MCF 10A (cell line): ENCODE measurements at regions of chrX and their contacts with region 1.

Region 1: DNA sequence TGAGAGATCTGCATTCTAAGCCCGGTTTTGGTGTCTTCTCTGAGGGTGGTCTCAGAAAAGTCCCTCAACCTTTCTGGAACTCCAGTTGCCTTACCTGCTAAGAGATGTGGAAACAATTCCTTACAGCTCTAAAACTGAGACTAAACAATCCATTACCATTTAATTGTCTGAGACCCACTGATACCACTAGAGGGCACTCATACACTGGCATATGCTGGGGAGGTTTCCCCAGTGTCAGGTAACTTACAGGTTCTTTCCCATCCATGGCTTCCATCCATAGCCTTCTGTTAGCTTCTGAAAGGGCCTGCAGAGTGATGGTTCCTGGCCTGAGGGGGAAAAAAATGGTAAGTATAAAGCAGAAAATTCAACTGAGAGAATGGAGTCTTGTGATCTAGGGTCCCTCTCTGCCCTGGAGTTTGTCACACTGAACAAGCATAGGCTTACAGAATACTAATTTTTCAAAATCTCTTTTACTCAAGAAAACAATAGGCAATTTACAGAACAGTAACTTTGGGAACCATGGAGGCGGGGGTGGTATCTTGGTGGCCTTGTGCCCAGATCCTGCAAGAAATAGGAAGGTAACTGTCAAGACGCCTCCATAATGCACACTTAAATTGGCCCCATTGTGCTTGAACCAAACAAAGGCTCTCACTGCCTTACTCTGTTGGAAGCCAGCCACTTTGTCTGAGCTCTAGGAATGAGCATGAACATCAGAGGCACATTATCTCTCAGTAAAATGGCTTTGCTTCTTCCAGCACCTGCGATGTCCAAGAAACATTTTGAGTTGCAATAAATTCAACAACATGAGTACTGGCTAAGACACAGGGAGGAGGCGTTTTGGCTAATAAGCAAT is 236.1 kb downstream of the OPHN1 start:
- DNase-seq: peak; percentile 73
- H3K4me3 Mint-ChIP-seq: no peak overlapping the region
- H3K27ac Mint-ChIP-seq: no peak overlapping the region
- H3K4me1 Mint-ChIP-seq: no peaks in the 10 kb centered on the region
- H3K27me3 Mint-ChIP-seq: peaks cover 22% of the 10 kb centered on the region
- CTCF ChIP-seq: peak; percentile 69

Region 2: DNA sequence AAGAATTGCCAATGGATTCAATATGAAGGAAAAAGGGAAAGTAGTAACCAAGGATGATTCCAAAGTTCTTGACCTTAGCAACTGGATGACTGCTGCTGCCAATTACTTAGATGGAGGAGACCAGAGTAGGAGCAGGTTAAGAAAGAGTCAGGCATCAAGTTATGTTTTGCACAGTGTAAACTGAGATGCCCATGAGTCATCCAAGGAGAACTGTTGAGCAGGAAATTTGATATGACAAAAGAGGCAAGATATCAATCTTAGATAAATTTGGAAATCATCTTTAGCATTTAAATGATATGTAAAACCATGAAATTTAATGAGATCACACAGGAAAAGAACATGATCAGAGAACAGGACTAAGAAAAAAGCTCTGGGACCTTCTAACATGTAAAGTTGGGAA is 125.1 kb before region 1 on chrX:
- CTCF ChIA-PET with region 1: no interaction called
- POLR2A ChIA-PET with region 1: no interaction called
- intact Hi-C with region 1: no loop called
- DNase-seq: peak; percentile 37
- H3K4me3 Mint-ChIP-seq: no peak overlapping the region
- H3K27ac Mint-ChIP-seq: no peak overlapping the region
- H3K4me1 Mint-ChIP-seq: peaks cover 6% of the 10 kb centered on the region
- H3K27me3 Mint-ChIP-seq: no peaks in the 10 kb centered on the region
- CTCF ChIP-seq: no peak

Region 3: DNA sequence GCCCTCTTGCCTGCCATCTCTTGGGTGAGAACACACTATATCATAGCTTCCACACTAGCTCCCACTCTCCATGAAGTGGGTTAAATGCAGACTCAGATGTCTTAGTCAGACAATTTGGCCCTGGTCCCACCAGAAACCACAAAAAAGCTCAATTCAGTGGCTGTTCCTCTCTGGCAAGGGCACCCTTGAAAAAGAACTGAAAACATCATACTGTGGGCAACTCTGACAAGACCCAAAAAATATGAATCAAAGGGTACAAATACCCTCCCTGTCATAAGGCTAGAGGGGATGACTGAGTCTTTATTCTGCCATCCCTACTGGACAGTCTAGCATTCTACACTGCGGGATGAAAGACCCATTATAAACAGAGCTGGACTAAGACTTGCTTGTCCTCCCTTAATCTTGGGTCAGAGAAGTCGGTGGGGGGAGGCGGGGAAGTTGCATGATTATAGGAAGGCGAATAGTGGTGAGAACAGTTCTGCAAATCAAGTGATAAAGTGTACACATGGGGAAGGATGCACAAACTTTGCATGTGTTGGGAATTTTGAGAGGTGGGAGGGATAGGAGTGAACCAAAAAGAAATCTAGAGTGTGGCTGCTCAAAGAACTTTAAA is 64.0 kb after region 1 on chrX:
- CTCF ChIA-PET with region 1: no interaction called
- POLR2A ChIA-PET with region 1: no interaction called
- intact Hi-C with region 1: no loop called
- DNase-seq: peak; percentile 39
- H3K4me3 Mint-ChIP-seq: no peak overlapping the region
- H3K27ac Mint-ChIP-seq: no peak overlapping the region
- H3K4me1 Mint-ChIP-seq: no peaks in the 10 kb centered on the region
- H3K27me3 Mint-ChIP-seq: peaks cover 19% of the 10 kb centered on the region
- CTCF ChIP-seq: no peak

Region 4: DNA sequence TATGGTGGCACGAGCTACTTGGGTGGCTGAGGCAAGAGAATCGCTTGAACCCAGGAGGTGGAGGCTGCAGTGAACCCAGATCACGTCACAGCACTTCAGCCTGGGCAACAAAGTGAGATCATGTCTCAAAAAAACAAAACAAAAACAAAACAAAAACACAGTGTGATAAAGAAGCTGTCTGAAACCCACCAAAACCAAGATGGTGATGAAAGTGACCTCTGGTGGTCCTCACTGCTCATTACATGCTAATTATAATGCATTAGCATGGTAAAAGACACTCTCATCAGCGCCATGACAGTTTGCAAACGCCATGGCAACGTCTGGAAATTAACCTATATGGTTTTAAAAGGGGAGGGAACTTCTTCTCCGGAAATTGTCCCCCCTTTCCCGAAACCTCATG is 265.5 kb after region 1 on chrX:
- CTCF ChIA-PET with region 1: interaction called, 5 read pairs
- POLR2A ChIA-PET with region 1: no interaction called
- intact Hi-C with region 1: loop called (anchors 1 kb)
- DNase-seq: peak; percentile 36
- H3K4me3 Mint-ChIP-seq: no peak overlapping the region
- H3K27ac Mint-ChIP-seq: no peak overlapping the region
- H3K4me1 Mint-ChIP-seq: no peaks in the 10 kb centered on the region
- H3K27me3 Mint-ChIP-seq: peaks cover 26% of the 10 kb centered on the region
- CTCF ChIP-seq: peak; percentile 48

Region 5: DNA sequence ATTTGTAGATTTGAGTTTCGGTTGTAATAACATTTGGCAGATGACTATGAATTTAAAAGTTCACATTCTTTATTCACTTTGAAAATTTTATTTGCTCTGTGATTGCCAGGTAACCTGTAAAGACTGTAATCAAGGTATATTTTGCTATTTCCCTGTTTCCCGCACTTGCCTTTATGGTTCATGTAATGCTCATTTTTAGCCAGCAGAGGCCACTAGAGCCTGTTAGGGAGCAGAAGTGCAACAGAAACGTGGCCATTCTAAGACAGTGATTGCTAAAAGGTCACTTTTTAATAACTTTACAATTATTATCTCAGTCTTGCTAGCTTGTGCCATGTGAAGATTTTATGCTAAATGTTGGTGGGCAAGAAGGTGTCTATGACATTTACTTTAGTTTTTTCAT is 314.1 kb after region 1 on chrX:
- CTCF ChIA-PET with region 1: interaction called, 21 read pairs
- POLR2A ChIA-PET with region 1: interaction called, 5 read pairs
- intact Hi-C with region 1: loop called (anchors 1 kb)
- DNase-seq: peak; percentile 68
- H3K4me3 Mint-ChIP-seq: no peak overlapping the region
- H3K27ac Mint-ChIP-seq: no peak overlapping the region
- H3K4me1 Mint-ChIP-seq: no peaks in the 10 kb centered on the region
- H3K27me3 Mint-ChIP-seq: peaks cover 17% of the 10 kb centered on the region
- CTCF ChIP-seq: peak; percentile 81

Region 6: GRCh38 chrX:68807818-68808217 is 610.7 kb after region 1 on chrX:
- CTCF ChIA-PET with region 1: interaction called, 24 read pairs
- POLR2A ChIA-PET with region 1: no interaction called
- intact Hi-C with region 1: loop called (anchors 2 kb)
- DNase-seq: peak; percentile 57
- H3K4me3 Mint-ChIP-seq: no peak overlapping the region
- H3K27ac Mint-ChIP-seq: no peak overlapping the region
- H3K4me1 Mint-ChIP-seq: no peaks in the 10 kb centered on the region
- H3K27me3 Mint-ChIP-seq: peaks cover 60% of the 10 kb centered on the region
- CTCF ChIP-seq: peak; percentile 42